ENCODE measurements at regions of chr12 and their contacts with region 1.

Region 1: DNA sequence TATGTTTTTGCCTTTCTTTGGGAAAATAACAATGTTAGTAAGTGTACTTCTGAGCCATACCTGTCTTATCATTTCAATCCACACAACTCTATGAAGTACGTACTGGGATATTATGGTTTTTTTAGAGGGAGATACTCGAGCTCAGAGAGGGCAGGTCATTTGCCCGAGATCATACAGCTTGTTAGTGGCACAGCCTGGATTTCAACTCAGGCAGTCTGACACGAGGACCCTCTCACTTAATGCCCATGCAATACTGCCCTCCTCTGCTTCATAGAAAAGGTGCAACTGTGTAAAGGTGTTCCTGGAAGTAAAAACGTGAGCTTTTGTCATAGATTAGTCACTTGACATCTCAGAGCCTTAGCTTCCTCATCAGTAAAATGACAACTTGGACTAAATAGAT is 128.0 kb downstream of the NDUFA12 start:
- DNase-seq: peak; percentile 40
- H3K4me3 Mint-ChIP-seq: no peak overlapping the region
- H3K27ac Mint-ChIP-seq: no peak overlapping the region
- H3K4me1 Mint-ChIP-seq: peaks cover 21% of the 10 kb centered on the region
- H3K27me3 Mint-ChIP-seq: peaks cover 58% of the 10 kb centered on the region

Region 2: DNA sequence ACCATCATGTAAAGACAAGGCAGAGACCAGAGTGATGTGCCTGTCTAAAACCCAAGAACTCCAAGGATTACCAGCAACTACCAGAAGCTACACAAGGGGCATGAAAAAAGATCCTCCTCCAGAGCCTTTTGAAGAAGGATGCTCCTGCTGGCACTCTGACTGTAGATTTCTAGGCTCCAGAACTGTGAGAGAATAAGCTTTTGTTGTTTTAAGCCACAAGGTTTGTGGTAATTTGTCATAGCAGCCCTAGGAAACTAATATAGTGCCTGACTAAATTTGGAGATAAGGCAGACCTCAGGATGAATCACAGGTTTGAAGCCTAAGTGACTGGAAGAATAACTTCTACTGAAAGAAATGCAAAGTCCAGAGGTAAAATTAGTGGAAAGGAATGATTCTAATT is 548.8 kb before region 1 on chr12:
- CTCF ChIA-PET with region 1: no interaction called
- intact Hi-C with region 1: loop called (anchors 2 kb)
- DNase-seq: no peak
- H3K4me3 Mint-ChIP-seq: no peak overlapping the region
- H3K27ac Mint-ChIP-seq: no peak overlapping the region
- H3K4me1 Mint-ChIP-seq: peaks cover 9% of the 10 kb centered on the region
- H3K27me3 Mint-ChIP-seq: no peaks in the 10 kb centered on the region

Region 3: GRCh38 chr12:94603434-94604365 is 271.8 kb before region 1 on chr12:
- CTCF ChIA-PET with region 1: no interaction called
- intact Hi-C with region 1: loop called (anchors 1 kb)
- DNase-seq: peak; percentile 66
- H3K4me3 Mint-ChIP-seq: no peak overlapping the region
- H3K27ac Mint-ChIP-seq: no peak overlapping the region
- H3K4me1 Mint-ChIP-seq: no peaks in the 10 kb centered on the region
- H3K27me3 Mint-ChIP-seq: peaks cover 9% of the 10 kb centered on the region

Region 4: GRCh38 chr12:94689002-94689645 is 186.4 kb before region 1 on chr12:
- CTCF ChIA-PET with region 1: no interaction called
- intact Hi-C with region 1: no loop called
- DNase-seq: no peak
- H3K4me3 Mint-ChIP-seq: no peak overlapping the region
- H3K27ac Mint-ChIP-seq: no peak overlapping the region
- H3K4me1 Mint-ChIP-seq: peaks cover 6% of the 10 kb centered on the region
- H3K27me3 Mint-ChIP-seq: no peaks in the 10 kb centered on the region

Region 5: DNA sequence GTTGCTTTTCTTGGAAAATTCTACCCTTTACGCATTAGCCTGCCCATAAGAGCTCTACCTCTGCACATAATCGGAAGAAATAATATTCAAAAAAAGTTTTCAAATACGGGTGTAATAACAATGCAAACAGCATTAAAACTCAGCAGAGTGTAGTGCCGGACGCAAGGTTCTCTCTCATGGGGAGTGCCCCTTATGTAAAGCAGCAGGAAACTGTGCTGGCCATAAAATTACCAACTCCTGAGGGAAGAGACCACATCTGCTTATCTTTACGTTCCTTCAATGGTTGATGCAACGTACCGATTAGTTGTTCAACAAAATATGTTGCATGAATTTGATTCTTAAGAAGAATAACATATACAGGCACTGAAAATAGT is 106.5 kb before region 1 on chr12:
- CTCF ChIA-PET with region 1: no interaction called
- intact Hi-C with region 1: loop called (anchors 1 kb)
- DNase-seq: peak; percentile 32
- H3K4me3 Mint-ChIP-seq: no peak overlapping the region
- H3K27ac Mint-ChIP-seq: no peak overlapping the region
- H3K4me1 Mint-ChIP-seq: peaks cover 9% of the 10 kb centered on the region
- H3K27me3 Mint-ChIP-seq: peaks cover 16% of the 10 kb centered on the region

Region 6: GRCh38 chr12:94980577-94980976 is 105.1 kb after region 1 on chr12:
- CTCF ChIA-PET with region 1: interaction called, 3 read pairs
- intact Hi-C with region 1: loop called (anchors 2 kb)
- DNase-seq: no peak
- H3K4me3 Mint-ChIP-seq: no peak overlapping the region
- H3K27ac Mint-ChIP-seq: no peak overlapping the region
- H3K4me1 Mint-ChIP-seq: peaks cover 47% of the 10 kb centered on the region
- H3K27me3 Mint-ChIP-seq: no peaks in the 10 kb centered on the region

Measured in activated naive CD4-positive, alpha-beta T cell treated with anti-CD3 and anti-CD28 coated beads for 36 hours (primary cell).